Pancreas (tissue), 10 donors: ENCODE measurements at regions of chr1 and their contacts with region 1.

Region 1: DNA sequence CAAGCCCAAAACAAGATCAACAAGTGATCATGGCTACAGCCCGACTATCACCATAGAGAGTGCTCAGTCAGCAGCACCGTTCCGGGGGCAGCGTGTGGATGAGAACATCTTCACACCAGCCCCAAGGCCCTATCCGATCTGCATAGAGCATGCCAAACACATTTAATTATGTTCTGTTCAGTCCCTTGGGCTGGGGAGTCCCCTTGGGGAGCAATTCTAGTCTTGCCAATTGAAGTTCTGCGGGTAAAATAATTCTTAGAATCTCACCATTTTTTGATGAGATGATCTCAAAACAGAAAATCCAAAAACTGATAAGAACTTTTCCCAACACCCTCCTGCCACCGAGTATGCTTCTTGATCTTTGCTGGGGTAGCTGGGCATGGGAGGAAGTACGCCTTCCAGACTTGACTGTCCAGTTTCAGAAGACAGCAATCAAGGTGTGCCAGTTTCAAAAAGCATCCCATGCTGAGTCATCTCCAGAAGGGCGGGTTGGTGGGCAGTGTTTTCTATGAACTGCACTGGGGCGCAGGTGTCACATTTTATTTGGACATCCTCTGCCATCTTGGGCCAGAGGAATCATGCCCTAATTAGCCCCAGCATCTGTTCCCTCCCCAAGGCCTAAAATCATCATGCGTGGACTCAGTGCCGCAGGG is 20.8 kb upstream of the PTPRF start:
- DNase-seq: no peak
- ATAC-seq: no peak
- H3K4me3 ChIP-seq: no peak overlapping the region
- H3K27ac ChIP-seq: no peak overlapping the region
- H3K4me1 ChIP-seq: no peaks in the 10 kb centered on the region
- H3K27me3 ChIP-seq: no peaks in the 10 kb centered on the region
- CTCF ChIP-seq: no peak

Region 2: GRCh38 chr1:43121256-43121900 is 388.5 kb before region 1 on chr1:
- intact Hi-C with region 1: no loop called
- DNase-seq: no peak
- ATAC-seq: no peak
- H3K4me3 ChIP-seq: no peak overlapping the region
- H3K27ac ChIP-seq: no peak overlapping the region
- H3K4me1 ChIP-seq: no peaks in the 10 kb centered on the region
- H3K27me3 ChIP-seq: peaks cover 0 to 4% (median 0%) of the 10 kb centered on the region in 4 donors
- CTCF ChIP-seq: no peak

Region 3: DNA sequence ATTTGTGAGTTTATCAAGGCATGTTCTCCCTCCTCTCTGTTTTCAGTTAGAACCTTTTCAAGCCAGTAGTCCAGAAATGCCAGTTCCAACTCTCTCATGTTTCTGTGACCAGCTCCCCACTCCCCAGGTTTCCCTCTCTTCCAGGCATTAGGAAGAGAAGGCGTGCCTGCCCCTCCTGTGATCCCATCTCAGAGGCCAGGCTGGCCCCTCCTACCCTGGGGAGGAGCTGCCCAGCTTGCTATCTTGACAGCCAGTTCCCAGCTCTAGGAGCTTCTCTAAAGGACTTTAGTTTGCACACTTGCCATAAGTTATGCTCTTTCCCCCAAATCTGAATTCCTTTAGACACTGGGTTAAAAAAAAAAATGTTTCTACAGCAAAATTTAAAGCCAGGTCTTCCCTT is 65.0 kb before region 1 on chr1:
- intact Hi-C with region 1: loop called in 1 of 3 experiments (anchors 10 kb)
- DNase-seq: peak in 2 of 6 donors; percentile 39 to 51
- ATAC-seq: peak in 1 of 4 donors; percentile 43
- H3K4me3 ChIP-seq: no peak overlapping the region
- H3K27ac ChIP-seq: no peak overlapping the region
- H3K4me1 ChIP-seq: no peaks in the 10 kb centered on the region
- H3K27me3 ChIP-seq: no peaks in the 10 kb centered on the region
- CTCF ChIP-seq: no peak